Activated CD4-positive, alpha-beta T cell treated with anti-CD3 and anti-CD28 coated beads for 36 hours (primary cell): ENCODE measurements at regions of chr11 and their contacts with region 1.

Region 1: DNA sequence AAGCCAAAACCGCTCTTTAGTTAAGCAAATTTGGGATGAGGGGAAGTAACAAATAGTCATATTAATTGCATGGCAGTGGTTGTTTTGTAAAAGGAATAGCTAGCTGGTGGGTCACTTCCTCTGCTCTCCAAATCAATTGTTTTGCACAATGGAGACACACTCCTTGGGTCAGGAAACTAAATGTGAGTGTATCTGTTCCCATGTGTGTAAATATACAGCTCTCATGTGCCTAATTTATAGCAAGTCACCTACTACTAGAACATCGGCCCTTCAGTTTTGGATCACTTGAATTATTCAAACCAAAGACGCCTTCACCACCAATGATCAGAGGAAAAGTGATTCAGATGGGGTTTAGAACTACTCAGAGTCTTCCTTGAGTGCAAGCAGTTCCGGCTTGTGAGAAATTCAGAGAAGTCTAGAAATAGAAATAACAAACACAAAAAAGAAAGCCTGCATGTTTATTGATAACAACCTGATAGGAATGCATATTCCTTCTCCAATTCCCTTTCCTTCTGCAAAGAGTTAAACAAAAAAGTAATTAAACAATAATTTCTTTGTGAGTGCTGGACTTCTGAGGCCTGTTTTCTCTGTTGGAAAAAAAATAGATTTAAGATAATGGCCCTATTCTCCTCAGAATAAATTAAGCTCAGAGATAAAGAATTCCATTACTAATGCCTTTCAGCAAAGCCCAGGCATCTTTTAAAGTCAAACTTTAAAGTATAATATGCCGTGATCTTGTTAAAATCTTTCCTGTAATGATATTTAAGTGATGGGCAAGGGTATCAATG is 100.4 kb downstream of the KIRREL3 start:
- DNase-seq: no peak
- ATAC-seq: no peak
- H3K4me3 Mint-ChIP-seq: no peak overlapping the region
- H3K27ac Mint-ChIP-seq: no peak overlapping the region
- H3K4me1 Mint-ChIP-seq: no peaks in the 10 kb centered on the region
- H3K27me3 Mint-ChIP-seq: peaks cover 8% of the 10 kb centered on the region

Region 2: DNA sequence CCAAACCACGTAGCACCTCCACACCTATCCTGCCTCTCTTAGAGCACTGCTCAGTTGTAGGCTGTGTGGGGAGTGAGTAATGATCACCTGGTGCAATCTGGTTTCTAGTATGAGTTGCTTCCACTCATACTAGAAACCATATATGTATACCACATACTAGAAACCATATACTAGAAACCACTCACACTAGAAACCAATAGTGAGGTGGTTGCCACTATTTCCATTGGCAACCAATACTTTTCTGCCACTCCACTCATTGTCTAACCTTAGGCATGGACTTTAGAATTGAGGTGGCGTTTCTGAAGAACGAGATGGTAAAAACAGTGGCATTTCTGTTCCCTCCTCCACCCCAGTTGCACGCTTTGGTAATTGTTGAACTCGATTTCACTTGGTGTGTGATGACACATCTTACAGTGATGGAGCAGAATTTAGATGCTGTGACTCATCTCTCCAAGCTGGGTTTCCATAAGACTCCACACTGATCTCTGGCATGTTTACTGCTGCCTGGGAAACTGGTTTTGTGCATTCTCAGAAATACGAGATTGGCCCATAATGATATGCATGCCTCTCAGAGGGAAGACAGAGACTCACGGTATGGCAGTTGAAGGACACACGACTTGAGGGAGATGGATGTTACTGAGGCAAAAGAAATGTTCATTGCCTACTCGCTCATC is 17.5 kb after region 1 on chr11:
- CTCF ChIA-PET with region 1: no interaction called
- POLR2A ChIA-PET with region 1: no interaction called
- intact Hi-C with region 1: no loop called
- DNase-seq: peak; percentile 51
- ATAC-seq: peak; percentile 92
- H3K4me3 Mint-ChIP-seq: no peak overlapping the region
- H3K27ac Mint-ChIP-seq: peak overlapping the region; percentile 22
- H3K4me1 Mint-ChIP-seq: peaks cover 6% of the 10 kb centered on the region
- H3K27me3 Mint-ChIP-seq: peaks cover 10% of the 10 kb centered on the region

Region 3: DNA sequence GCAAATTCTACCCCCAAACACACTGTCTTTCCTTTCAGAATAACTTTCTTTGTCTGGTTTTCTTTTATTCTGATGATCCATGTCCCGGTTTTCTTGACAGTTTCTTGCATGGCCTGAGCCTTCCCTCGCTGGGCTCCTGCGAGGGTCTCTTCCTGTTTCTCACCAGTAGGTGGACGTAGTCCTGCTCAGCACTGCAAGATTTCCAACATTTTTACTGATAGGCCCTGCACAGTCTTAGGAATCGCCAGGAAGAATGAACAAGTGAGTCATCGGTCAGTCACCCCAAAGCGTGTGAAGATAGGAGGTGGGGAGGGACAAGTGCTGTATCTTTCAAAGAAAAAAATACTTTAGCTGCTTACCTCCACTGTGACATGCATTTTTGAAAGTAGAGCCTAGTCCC is 117.3 kb after region 1 on chr11:
- CTCF ChIA-PET with region 1: no interaction called
- POLR2A ChIA-PET with region 1: no interaction called
- intact Hi-C with region 1: no loop called
- DNase-seq: no peak
- ATAC-seq: no peak
- H3K4me3 Mint-ChIP-seq: no peak overlapping the region
- H3K27ac Mint-ChIP-seq: no peak overlapping the region
- H3K4me1 Mint-ChIP-seq: no peaks in the 10 kb centered on the region
- H3K27me3 Mint-ChIP-seq: peaks cover 20% of the 10 kb centered on the region

Region 4: DNA sequence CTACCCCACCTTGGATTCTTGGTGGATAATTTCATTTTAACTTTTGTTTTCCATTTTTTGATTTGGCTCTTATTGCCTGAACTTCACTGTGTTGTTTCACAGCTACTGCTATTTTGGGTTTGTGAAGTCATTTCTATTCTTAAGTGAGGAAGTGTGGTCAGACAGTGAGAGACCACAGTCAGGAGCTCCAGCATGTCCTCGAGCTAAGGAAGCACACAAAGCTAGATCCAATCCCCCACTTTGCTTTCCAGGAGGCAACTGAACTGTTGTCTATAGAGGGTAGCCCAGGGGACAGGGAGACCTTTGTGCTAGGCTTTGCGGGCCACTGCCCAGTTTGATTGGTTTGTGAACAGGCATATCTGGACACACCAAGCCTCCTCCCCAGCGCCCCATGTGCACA is 352.2 kb after region 1 on chr11:
- CTCF ChIA-PET with region 1: no interaction called
- POLR2A ChIA-PET with region 1: no interaction called
- intact Hi-C with region 1: loop called in 1 of 2 experiments (anchors 10 kb)
- DNase-seq: no peak
- ATAC-seq: no peak
- H3K4me3 Mint-ChIP-seq: no peak overlapping the region
- H3K27ac Mint-ChIP-seq: no peak overlapping the region
- H3K4me1 Mint-ChIP-seq: no peaks in the 10 kb centered on the region
- H3K27me3 Mint-ChIP-seq: peaks cover 2% of the 10 kb centered on the region